Activated CD4-positive, alpha-beta T cell treated with anti-CD3 and anti-CD28 coated beads for 36 hours (primary cell): ENCODE measurements at regions of chr14 and their contacts with region 1.

Region 1: DNA sequence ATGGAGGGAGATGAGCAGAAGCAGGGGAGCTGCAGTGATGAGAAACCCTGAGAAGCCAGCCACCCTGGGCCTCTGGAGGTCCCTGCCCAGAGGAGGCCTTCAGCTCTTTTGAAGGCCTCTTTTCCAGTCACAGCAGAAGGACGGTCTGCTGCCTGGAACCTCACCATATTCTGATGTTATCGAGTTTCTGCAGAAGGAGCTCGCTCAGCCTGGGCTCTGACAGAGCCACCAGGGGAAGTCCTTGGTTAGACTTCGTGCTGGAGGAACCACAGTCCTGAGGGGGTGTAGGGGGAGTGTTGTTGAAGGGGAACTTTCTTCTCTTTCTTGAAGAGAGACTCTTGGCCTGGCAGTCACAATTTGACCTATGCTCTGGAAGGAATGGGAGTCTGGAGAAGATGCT is 25.1 kb upstream of the BATF start:
- DNase-seq: peak; percentile 66
- ATAC-seq: peak; percentile 73
- H3K4me3 Mint-ChIP-seq: peak overlapping the region; percentile 48
- H3K27ac Mint-ChIP-seq: peak overlapping the region; percentile 82
- H3K4me1 Mint-ChIP-seq: peaks cover 61% of the 10 kb centered on the region
- H3K27me3 Mint-ChIP-seq: no peaks in the 10 kb centered on the region

Region 2: DNA sequence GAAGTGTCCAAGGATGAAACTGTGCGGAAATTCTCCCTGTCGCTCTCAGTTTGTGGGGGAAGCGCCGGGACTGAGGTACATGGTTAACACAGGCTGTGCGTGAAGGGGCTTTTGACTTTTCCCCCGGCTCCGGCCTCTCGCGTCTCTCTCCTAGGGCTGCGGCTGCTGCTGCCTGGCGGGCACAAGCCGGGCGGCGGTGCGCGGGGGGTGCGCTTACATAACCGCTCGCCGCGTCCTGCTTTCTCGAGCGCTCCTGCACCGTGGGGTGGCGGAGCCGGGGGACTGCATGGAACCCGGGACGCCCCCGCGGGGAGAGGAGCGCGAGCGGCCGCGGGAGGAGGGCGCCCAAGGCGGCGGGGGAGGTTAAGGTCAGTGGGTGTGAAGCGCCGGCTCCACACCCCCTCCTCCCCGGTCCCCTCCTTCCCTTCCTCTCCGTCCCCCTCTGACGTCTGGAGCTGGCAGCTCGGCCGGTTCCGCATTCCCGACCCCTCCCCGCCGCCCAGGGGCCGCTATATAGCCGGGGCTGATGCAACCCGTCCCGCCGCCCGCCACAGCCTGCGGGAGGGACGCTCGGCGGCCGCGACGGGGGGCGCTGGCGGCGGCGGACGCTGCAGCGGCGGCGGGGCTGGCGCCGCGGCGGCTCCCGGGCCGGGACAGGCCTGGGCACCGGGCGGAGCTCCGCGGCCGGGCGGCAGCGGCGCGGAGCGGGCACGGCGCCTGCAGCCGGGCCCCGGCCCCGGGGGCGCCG is 69.5 kb before region 1 on chr14 and contains the start of gene JDP2:
- CTCF ChIA-PET with region 1: no interaction called
- POLR2A ChIA-PET with region 1: no interaction called
- intact Hi-C with region 1: loop called in 1 of 2 experiments (anchors 5 kb)
- DNase-seq: peak; percentile 68
- ATAC-seq: peak; percentile 47
- H3K4me3 Mint-ChIP-seq: peak within 1 kb of the TSS; percentile 66
- H3K27ac Mint-ChIP-seq: peak within 1 kb of the TSS; percentile 62
- H3K4me1 Mint-ChIP-seq: peaks cover 17% of the 10 kb centered on the region
- H3K27me3 Mint-ChIP-seq: peaks cover 14% of the 10 kb centered on the region
- total RNA-seq, gene JDP2: 2.4 to 2.6 TPM